GM12878 (cell line): ENCODE measurements at regions of chr15 and their contacts with region 1.

Region 1: DNA sequence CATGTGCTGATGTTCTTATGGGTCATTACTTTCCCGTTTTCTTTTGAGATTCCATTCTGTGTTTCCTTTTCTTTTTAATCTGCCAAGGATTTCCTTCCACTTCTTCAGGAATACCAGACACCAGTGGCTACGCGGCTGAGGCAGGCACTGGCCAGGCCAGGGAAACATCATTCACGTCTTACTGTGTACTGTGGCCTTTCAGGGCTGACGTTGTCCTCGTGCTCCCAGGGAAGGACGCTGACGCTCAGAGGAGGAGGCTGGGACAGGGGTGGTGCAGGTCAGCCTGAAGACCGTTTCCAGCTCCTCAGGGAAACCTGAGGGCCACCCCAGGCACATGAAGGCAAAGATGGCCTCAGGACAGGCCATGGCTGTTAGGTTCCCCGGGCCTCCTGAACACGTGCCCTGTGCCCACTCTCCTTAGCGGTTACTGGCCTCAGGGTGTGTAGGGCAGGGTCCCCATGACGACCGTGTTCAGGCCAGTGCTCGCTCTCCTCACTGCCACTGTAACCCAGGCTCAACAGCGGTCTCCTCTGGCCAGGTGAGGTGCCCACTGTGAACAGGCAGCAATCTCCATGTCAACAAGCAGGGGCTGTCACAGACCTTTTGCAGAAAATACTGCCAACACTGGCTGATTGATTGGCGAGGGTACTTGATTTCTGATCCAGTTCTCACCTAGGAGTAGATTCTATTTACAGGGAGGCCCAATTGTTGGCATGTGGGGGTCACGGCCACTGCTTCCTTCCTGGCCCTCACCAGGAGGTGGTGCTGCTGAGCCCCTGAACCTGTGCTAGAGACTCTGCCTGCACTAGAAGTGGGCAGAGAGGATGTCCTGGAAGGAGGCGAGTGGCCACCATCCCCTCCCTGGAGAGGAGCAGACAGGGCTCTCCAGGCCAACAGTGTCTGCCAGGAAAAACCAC is 169.5 kb downstream of the ATP10A start:
- DNase-seq: no peak
- ATAC-seq: peak; percentile 80
- H3K4me3 ChIP-seq: no peak overlapping the region
- H3K27ac ChIP-seq: no peak overlapping the region
- H3K4me1 ChIP-seq: no peaks in the 10 kb centered on the region
- H3K27me3 ChIP-seq: no peaks in the 10 kb centered on the region
- CTCF ChIP-seq: peak; percentile 17 to 53 (median 51); a peak in 3 of 6 replicates
- EP300 ChIP-seq: no peak
- POLR2A ChIP-seq: no peak
- RAD21 ChIP-seq: peak; percentile 19; the same call in 1 of the 2 replicates

Region 2: GRCh38 chr15:25333049-25333448 is 360.5 kb before region 1 on chr15:
- CTCF ChIA-PET with region 1: no interaction called
- POLR2A ChIA-PET with region 1: no interaction called
- RAD21 ChIA-PET with region 1: no interaction called
- SMC1A ChIA-PET with region 1: no interaction called
- in situ Hi-C with region 1: loop called (anchors 10 kb)
- intact Hi-C with region 1: no loop called
- DNase-seq: no peak
- ATAC-seq: no peak
- H3K4me3 ChIP-seq: no peak overlapping the region
- H3K27ac ChIP-seq: no peak overlapping the region
- H3K4me1 ChIP-seq: no peaks in the 10 kb centered on the region
- H3K27me3 ChIP-seq: no peaks in the 10 kb centered on the region
- CTCF ChIP-seq: no peak
- EP300 ChIP-seq: no peak
- POLR2A ChIP-seq: no peak
- RAD21 ChIP-seq: no peak

Region 3: DNA sequence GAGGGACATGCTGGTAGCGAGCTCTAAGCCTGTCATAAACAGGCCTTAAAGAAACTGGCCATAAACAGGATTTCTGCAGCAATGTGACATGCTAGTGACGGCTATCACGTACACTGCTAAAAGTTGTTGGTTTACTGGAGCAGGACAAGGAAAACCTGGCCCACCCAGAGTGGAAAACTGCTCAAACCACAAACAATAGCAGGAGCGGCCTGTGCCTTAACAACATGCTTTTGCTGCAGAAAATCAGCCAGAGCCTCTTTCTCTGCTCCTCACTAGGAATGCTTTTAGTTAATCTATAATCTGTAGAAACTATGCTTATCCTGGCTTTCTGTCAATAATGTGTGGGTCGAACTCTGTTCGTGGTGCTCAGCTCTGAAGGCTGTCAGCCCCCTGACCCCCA is 51.8 kb before region 1 on chr15:
- CTCF ChIA-PET with region 1: no interaction called
- POLR2A ChIA-PET with region 1: no interaction called
- RAD21 ChIA-PET with region 1: no interaction called
- SMC1A ChIA-PET with region 1: no interaction called
- in situ Hi-C with region 1: loop called (anchors 5 kb)
- intact Hi-C with region 1: no loop called
- DNase-seq: no peak
- ATAC-seq: no peak
- H3K4me3 ChIP-seq: no peak overlapping the region
- H3K27ac ChIP-seq: no peak overlapping the region
- H3K4me1 ChIP-seq: no peaks in the 10 kb centered on the region
- H3K27me3 ChIP-seq: no peaks in the 10 kb centered on the region
- CTCF ChIP-seq: no peak
- EP300 ChIP-seq: no peak
- POLR2A ChIP-seq: no peak
- RAD21 ChIP-seq: no peak

Region 4: GRCh38 chr15:25863111-25863967 is 169.8 kb after region 1 on chr15 and contains the start of gene ATP10A:
- CTCF ChIA-PET with region 1: no interaction called
- POLR2A ChIA-PET with region 1: no interaction called
- RAD21 ChIA-PET with region 1: no interaction called
- SMC1A ChIA-PET with region 1: no interaction called
- in situ Hi-C with region 1: loop called (anchors 10 kb)
- intact Hi-C with region 1: no loop called
- DNase-seq: no peak
- ATAC-seq: no peak
- H3K4me3 ChIP-seq: no peak within 1 kb of the TSS; the same call in 1 of the 2 replicates
- H3K27ac ChIP-seq: no peak within 1 kb of the TSS
- H3K4me1 ChIP-seq: no peaks in the 10 kb centered on the region
- H3K27me3 ChIP-seq: no peaks in the 10 kb centered on the region; a peak in 1 of 4 replicates
- CTCF ChIP-seq: no peak
- EP300 ChIP-seq: no peak
- POLR2A ChIP-seq: no peak
- RAD21 ChIP-seq: no peak
- polyA plus RNA-seq, gene ATP10A: 0.07 TPM in 1 of 2 experiments, not detected in the other